ENCODE measurements at regions of chr21 and their contacts with region 1.

Region 1: GRCh38 chr21:41283211-41283818 is 33.3 kb upstream of the FAM3B start:
- DNase-seq: peak; percentile 46
- H3K4me3 ChIP-seq: no peak overlapping the region
- H3K27me3 ChIP-seq: peaks cover 5% of the 10 kb centered on the region; the same call in 1 of the 2 replicates
- CTCF ChIP-seq: peak; percentile 76

Region 2: DNA sequence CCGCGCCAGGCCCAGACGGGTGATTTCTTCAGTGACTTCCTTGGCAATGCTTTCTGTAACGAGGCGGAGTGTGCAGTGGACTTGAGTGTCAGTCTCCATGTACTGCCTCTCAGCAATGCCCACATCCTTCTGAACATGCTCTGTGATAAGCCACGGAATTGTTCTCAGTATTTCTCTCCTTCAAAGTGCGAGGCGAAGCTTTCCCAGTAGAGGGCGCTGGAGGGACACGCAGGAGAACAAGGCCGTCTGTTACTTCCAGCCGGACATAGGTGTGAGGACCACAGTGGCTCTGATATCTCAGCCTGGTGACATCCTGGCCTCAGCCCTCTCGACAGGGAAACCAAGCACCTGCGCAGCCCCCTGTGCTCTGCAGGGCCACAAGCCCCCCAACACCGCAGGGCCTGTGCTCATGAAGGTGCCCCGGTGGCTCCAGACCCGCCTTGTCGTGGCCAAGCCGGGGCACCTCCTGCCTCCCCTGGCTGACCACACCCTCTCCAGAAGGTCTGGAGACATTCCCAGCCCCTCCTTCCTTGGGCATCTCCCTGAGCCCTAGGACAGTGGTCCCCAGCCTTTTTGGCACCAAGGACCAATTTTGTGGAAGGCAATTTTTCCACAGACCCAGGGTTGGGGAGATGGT is 161.4 kb before region 1 on chr21:
- CTCF ChIA-PET with region 1: interaction called, 16 read pairs
- POLR2A ChIA-PET with region 1: no interaction called
- DNase-seq: peak; percentile 32
- H3K4me3 ChIP-seq: no peak overlapping the region
- H3K27me3 ChIP-seq: peaks cover 4% of the 10 kb centered on the region; the same call in 1 of the 2 replicates
- CTCF ChIP-seq: peak; percentile 95

Region 3: GRCh38 chr21:41167348-41168342 is 115.7 kb before region 1 on chr21 and contains the start of gene BACE2:
- CTCF ChIA-PET with region 1: no interaction called
- POLR2A ChIA-PET with region 1: no interaction called
- DNase-seq: no peak
- H3K4me3 ChIP-seq: peak within 1 kb of the TSS; percentile 69
- H3K27me3 ChIP-seq: no peaks in the 10 kb centered on the region
- CTCF ChIP-seq: 0 out of 2 replicates have a peak, but pooled peaks have one; percentile 10
- polyA plus RNA-seq, gene BACE2: 35.8 and 38.5 TPM in 2 replicates

Region 4: DNA sequence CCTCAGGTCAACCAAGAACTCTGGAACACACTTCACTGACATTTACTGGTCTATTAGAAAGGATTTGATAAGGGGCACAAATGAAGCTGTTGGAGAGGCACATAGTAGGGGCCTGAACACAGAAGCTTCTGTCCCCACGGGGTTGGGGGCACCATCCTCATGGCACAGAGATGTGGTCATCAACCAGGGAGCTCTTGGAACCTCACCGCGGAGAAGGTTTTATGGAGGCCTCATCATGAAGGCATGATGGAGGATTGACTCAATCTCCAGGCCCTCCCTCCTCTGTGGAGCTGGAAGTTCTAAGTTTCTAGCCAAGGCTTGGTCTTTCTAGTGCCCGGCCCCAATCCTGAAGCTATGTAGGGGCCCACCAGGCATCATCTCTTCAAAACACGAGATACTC is 166.3 kb after region 1 on chr21:
- CTCF ChIA-PET with region 1: interaction called, 14 read pairs
- POLR2A ChIA-PET with region 1: no interaction called
- DNase-seq: no peak
- H3K4me3 ChIP-seq: no peak overlapping the region
- H3K27me3 ChIP-seq: no peaks in the 10 kb centered on the region
- CTCF ChIP-seq: no peak

Region 5: GRCh38 chr21:41466024-41466835 is 182.9 kb after region 1 on chr21:
- CTCF ChIA-PET with region 1: interaction called, 29 read pairs
- POLR2A ChIA-PET with region 1: no interaction called
- DNase-seq: no peak
- H3K4me3 ChIP-seq: no peak overlapping the region
- H3K27me3 ChIP-seq: peaks cover 3% of the 10 kb centered on the region
- CTCF ChIP-seq: no peak

Region 6: DNA sequence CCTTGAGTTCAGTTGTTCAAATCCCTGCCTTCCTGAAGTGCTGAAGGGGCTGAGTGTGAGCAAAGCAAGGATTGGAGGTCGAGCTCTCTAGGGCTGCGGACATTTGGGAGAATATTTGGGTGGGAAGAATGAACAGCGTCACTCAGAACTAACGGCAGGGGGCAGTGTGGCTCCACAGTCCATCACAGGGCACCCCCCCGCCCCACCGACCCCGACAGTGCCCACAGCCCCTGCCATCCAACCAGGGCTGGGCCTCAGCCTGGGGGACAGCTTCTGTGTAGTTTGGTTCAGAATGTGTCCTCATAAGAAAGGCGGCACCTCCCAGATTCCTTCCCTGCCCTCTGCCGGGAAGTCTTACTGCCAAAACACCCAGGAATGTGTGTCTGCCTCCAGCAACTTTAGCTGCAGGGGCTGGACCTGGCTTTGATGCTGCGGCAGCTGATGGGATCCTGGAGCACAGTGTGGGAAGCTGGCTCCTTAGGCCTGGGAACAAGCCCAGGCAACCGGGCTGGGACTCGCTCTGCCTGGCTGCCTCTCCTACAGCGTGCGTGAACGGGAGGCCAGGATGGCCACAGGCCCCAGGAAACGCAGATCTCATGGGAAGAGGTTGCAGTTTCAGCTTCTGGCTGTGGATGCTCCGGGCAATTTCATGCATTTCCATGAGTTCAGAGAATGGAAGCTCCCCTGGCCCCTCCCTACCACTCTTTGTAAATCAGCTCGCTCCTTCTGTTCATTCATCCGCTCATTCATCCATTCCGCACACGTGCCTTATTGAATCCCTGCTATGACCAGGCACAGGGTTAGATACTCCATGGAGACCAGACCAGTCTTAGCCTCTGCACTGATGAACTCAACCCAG is 329.6 kb after region 1 on chr21:
- CTCF ChIA-PET with region 1: interaction called, 18 read pairs
- POLR2A ChIA-PET with region 1: interaction called, 7 read pairs
- DNase-seq: peak; percentile 97
- H3K4me3 ChIP-seq: no peak overlapping the region
- H3K27me3 ChIP-seq: no peaks in the 10 kb centered on the region; the same call in 1 of the 2 replicates
- CTCF ChIP-seq: peak; percentile 75

Region 7: GRCh38 chr21:41816220-41817165 is 533.2 kb after region 1 on chr21:
- CTCF ChIA-PET with region 1: interaction called, 25 read pairs
- POLR2A ChIA-PET with region 1: no interaction called
- DNase-seq: no peak
- H3K4me3 ChIP-seq: no peak overlapping the region
- H3K27me3 ChIP-seq: no peaks in the 10 kb centered on the region
- CTCF ChIP-seq: peak; percentile 95